GM13976 (cell line): ENCODE measurements at regions of chr15 and their contacts with region 1.

Region 1: GRCh38 chr15:40274350-40275274 is 8.3 kb downstream of the ANKRD63 start:
- DNase-seq: peak; percentile 90
- CTCF ChIP-seq: peak; percentile 100

Region 2: DNA sequence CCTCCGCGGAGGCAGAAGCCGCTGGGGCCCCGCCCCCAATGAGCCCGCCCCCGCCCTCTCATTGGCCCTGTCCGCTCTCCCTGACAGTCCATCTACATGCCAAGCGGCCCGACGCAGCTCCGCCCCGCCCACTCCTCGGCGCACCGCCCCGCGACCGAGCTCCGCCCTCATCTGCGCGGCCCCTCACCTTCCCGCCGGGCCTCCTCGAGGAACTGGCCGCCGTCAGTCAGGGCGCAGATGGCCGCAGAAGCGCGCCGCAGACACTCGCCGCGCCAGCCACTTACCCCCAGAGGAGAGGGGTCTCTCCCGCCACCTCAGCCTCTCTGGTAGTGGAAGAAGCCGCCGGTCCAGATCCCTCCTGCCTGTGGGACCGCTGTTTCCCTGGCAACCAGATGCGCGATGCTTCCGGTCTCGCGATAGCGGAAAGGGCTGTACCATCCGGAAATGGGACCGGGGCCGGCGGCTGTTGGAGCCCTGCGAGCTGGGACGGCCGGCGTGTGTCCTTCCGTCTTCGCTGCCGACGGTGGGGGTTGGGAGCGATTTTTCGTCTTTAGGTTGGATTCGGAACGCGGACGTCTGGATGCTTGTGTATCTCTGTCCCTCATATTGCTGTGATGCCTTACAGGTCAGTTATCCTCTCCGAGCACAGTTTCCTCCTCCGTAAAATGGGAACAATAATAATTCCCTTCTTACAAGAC is 492.0 kb before region 1 on chr15 and contains the start of gene FSIP1:
- in situ Hi-C with region 1: loop called (anchors 25 kb)
- DNase-seq: peak; percentile 99
- CTCF ChIP-seq: no peak

Region 3: DNA sequence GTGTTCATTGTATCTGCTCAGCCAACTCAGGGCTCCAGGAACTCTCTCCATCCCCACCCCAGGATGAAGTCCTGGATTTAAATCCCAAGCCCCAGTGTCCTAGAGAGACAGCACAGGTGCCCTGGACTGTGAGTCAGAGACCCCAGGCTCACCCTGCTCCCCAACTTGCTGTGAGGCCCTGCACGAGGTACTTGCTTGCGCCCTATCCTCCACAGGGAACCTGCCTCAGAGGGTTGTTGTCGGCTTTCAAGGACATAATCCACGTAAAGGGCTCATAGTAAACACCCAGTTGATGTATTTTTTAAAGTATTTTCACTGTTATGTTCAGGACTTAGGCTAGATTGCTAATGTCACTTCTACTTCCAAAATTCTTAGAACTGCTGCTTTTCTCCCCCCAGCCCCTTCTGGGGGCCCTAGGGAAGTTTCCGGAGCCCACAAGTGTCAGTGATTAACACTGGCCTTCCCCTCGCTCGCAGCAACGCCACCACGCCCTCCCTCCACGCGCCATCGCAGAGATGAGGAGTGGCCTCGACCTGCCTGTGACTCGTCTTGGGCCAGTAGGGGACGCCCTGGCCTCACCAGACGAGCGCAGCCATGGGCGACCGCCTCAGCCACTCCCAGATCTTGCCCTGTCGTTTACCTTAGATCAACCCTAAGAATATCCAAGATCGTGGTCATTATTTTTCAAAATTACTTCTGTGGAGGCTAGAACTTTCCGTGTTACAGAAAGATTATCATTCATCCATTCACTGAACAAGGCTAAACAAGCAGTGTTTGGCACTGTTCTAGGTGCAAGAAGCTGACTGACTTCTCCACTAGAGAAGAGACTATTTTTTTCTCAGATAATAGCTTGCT is 229.7 kb before region 1 on chr15:
- in situ Hi-C with region 1: loop called (anchors 5 kb)
- DNase-seq: peak; percentile 88
- CTCF ChIP-seq: peak; percentile 99

Region 4: DNA sequence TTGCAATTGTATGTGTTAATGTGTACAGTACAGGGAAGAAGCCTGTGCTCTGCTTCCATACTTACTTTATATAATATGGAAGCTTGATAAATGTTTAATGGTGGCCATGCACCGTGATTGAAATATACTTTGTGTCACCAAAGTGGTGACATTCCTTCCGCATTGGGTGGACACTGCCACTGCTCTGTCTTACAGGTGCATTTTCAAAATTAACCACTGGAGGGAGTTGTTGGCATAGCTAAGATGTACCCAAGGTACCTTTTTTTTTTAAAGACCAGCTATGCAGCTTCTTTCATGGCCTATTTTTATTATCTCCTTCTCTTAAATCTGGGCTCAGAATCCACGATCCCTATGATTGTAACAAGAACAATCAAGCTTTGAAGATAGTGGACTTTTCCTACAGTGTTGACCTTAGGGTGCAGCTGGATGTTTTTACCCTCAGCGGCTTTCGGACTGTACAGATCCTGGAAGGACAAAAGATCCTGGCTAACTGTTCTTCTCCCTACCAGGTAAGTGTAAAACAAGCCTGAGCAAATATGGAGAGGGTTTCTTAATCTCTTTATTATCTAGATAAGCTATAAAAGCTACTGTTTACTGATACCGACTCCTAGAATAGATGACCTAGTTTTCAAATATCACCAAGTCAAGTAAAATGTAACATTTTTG is 57.3 kb before region 1 on chr15:
- in situ Hi-C with region 1: loop called (anchors 5 kb)
- DNase-seq: peak; percentile 62
- CTCF ChIP-seq: peak; percentile 64